ENCODE measurements at regions of chr7 and their contacts with region 1.

Region 1: GRCh38 chr7:142459551-142459963 is 201.7 kb upstream of the PRSS58 start:
- DNase-seq: peak in 5 of 9 donors; percentile 19 to 42 (median 34)
- ATAC-seq: peak; percentile 72
- H3K4me3 ChIP-seq: no peak overlapping the region
- H3K4me3 Mint-ChIP-seq: peak overlapping the region; percentile 12 to 83 (median 47)
- H3K27ac ChIP-seq: peak overlapping the region; percentile 46
- H3K27ac Mint-ChIP-seq: peak overlapping the region; percentile 24 to 92 (median 67)
- H3K4me1 ChIP-seq: peaks cover 4 to 42% of the 10 kb centered on the region in 2 donors
- H3K4me1 Mint-ChIP-seq: peaks cover 38 to 86% (median 81%) of the 10 kb centered on the region in 7 donors
- H3K27me3 ChIP-seq: no peaks in the 10 kb centered on the region
- H3K27me3 Mint-ChIP-seq: peaks cover 0 to 7% (median 0%) of the 10 kb centered on the region in 5 donors

Region 2: GRCh38 chr7:142298009-142298408 is 161.5 kb before region 1 on chr7:
- CTCF ChIA-PET with region 1: no interaction called
- POLR2A ChIA-PET with region 1: no interaction called
- intact Hi-C with region 1: no loop called
- DNase-seq: no peak
- ATAC-seq: no peak
- H3K4me3 ChIP-seq: no peak overlapping the region
- H3K4me3 Mint-ChIP-seq: peak overlapping the region in 2 of 10 donors; percentile 31 to 62
- H3K27ac ChIP-seq: no peak overlapping the region
- H3K27ac Mint-ChIP-seq: no peak overlapping the region
- H3K4me1 ChIP-seq: peaks cover 0 to 21% of the 10 kb centered on the region in 2 donors
- H3K4me1 Mint-ChIP-seq: peaks cover 9 to 36% (median 24%) of the 10 kb centered on the region in 7 donors
- H3K27me3 ChIP-seq: no peaks in the 10 kb centered on the region
- H3K27me3 Mint-ChIP-seq: peaks cover 10 to 42% (median 25%) of the 10 kb centered on the region in 5 donors

Region 3: GRCh38 chr7:142412551-142413193 is 46.9 kb before region 1 on chr7:
- CTCF ChIA-PET with region 1: interaction called, 4 read pairs
- POLR2A ChIA-PET with region 1: no interaction called
- intact Hi-C with region 1: loop called in 1 of 2 experiments (anchors 1 kb)
- DNase-seq: peak in 8 of 9 donors; percentile 19 to 58 (median 38)
- ATAC-seq: peak; percentile 88
- H3K4me3 ChIP-seq: no peak overlapping the region
- H3K4me3 Mint-ChIP-seq: peak overlapping the region in 6 of 10 donors; percentile 8 to 56 (median 26)
- H3K27ac ChIP-seq: no peak overlapping the region
- H3K27ac Mint-ChIP-seq: peak overlapping the region in 3 of 9 donors; percentile 3 to 69 (median 6)
- H3K4me1 ChIP-seq: peaks cover 0 to 3% of the 10 kb centered on the region in 2 donors
- H3K4me1 Mint-ChIP-seq: peaks cover 4 to 7% (median 6%) of the 10 kb centered on the region in 7 donors
- H3K27me3 ChIP-seq: no peaks in the 10 kb centered on the region
- H3K27me3 Mint-ChIP-seq: peaks cover 0 to 19% (median 0%) of the 10 kb centered on the region in 5 donors

Region 4: DNA sequence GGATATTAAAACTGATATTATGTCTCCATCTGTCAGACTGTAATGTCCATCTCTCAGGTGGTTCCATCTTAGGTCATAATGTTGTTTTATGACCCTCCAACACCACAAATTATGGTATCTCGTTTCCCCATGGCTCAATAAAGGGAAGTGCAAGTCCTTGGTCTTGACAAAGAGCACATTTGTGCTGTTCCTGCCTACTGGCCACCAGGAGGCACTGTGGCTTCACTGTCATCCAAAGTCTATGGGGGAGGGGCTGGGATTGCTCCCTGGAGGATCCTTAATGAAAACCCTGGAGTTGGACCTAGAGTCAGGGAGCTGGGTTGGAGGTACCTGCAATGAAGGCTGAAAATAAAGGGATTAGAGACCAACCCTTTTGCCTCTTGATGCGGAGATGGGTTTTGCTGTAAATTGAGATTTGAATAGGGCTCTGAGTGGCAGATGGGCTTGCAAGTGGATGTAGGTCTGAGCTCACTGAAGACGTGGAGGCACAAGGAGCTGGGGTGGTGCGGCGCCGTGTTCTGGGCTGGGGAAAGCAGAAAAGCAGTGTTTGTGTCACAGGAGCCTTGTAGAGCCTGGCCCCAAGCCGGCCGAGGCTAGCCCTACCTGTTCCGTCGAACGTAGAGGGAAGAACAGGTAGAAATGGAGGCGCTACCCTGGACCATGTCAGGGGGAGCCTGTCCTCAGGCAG is 21.2 kb before region 1 on chr7:
- CTCF ChIA-PET with region 1: interaction called, 6 read pairs
- POLR2A ChIA-PET with region 1: interaction called, 7 read pairs
- intact Hi-C with region 1: loop called in 1 of 2 experiments (anchors 1 kb)
- DNase-seq: peak in 4 of 9 donors; percentile 25 to 37 (median 31)
- ATAC-seq: peak; percentile 71
- H3K4me3 ChIP-seq: no peak overlapping the region
- H3K4me3 Mint-ChIP-seq: peak overlapping the region in 2 of 10 donors; percentile 0 to 4
- H3K27ac ChIP-seq: no peak overlapping the region
- H3K27ac Mint-ChIP-seq: peak overlapping the region in 2 of 9 donors; percentile 8 to 11
- H3K4me1 ChIP-seq: peaks cover 6 to 26% of the 10 kb centered on the region in 2 donors
- H3K4me1 Mint-ChIP-seq: peaks cover 39 to 70% (median 66%) of the 10 kb centered on the region in 7 donors
- H3K27me3 ChIP-seq: no peaks in the 10 kb centered on the region
- H3K27me3 Mint-ChIP-seq: no peaks in the 10 kb centered on the region

Region 5: GRCh38 chr7:142469696-142470543 is 10.4 kb after region 1 on chr7:
- CTCF ChIA-PET with region 1: interaction called, 452 read pairs
- POLR2A ChIA-PET with region 1: interaction called, 8 read pairs
- intact Hi-C with region 1: no loop called
- DNase-seq: no peak
- ATAC-seq: peak; percentile 40
- H3K4me3 ChIP-seq: no peak overlapping the region
- H3K4me3 Mint-ChIP-seq: peak overlapping the region; percentile 33 to 83 (median 67)
- H3K27ac ChIP-seq: no peak overlapping the region
- H3K27ac Mint-ChIP-seq: peak overlapping the region in 7 of 9 donors; percentile 37 to 92 (median 83)
- H3K4me1 ChIP-seq: peaks cover 0 to 47% of the 10 kb centered on the region in 2 donors
- H3K4me1 Mint-ChIP-seq: peaks cover 40 to 89% (median 82%) of the 10 kb centered on the region in 7 donors
- H3K27me3 ChIP-seq: no peaks in the 10 kb centered on the region
- H3K27me3 Mint-ChIP-seq: peaks cover 0 to 3% (median 0%) of the 10 kb centered on the region in 5 donors

Region 6: GRCh38 chr7:142496545-142497041 is 37.0 kb after region 1 on chr7:
- CTCF ChIA-PET with region 1: interaction called, 79 read pairs
- POLR2A ChIA-PET with region 1: interaction called, 5 read pairs
- intact Hi-C with region 1: loop called (anchors 1 to 5 kb)
- DNase-seq: peak in 7 of 9 donors; percentile 39 to 58 (median 45)
- ATAC-seq: peak; percentile 71
- H3K4me3 ChIP-seq: peak overlapping the region; percentile 30
- H3K4me3 Mint-ChIP-seq: peak overlapping the region; percentile 41 to 85 (median 70)
- H3K27ac ChIP-seq: peak overlapping the region; percentile 64
- H3K27ac Mint-ChIP-seq: peak overlapping the region; percentile 33 to 93 (median 77)
- H3K4me1 ChIP-seq: peaks cover 5 to 46% of the 10 kb centered on the region in 2 donors
- H3K4me1 Mint-ChIP-seq: peaks cover 15 to 72% (median 65%) of the 10 kb centered on the region in 7 donors
- H3K27me3 ChIP-seq: no peaks in the 10 kb centered on the region
- H3K27me3 Mint-ChIP-seq: peaks cover 0 to 9% (median 0%) of the 10 kb centered on the region in 5 donors

Region 7: GRCh38 chr7:142516038-142516501 is 56.5 kb after region 1 on chr7:
- CTCF ChIA-PET with region 1: interaction called, 23 read pairs
- POLR2A ChIA-PET with region 1: interaction called, 7 read pairs
- intact Hi-C with region 1: loop called (anchors 1 to 5 kb)
- DNase-seq: peak in 5 of 9 donors; percentile 42 to 55 (median 47)
- ATAC-seq: peak; percentile 85
- H3K4me3 ChIP-seq: no peak overlapping the region
- H3K4me3 Mint-ChIP-seq: peak overlapping the region in 7 of 10 donors; percentile 4 to 81 (median 46)
- H3K27ac ChIP-seq: no peak overlapping the region
- H3K27ac Mint-ChIP-seq: peak overlapping the region in 8 of 9 donors; percentile 32 to 92 (median 74)
- H3K4me1 ChIP-seq: peaks cover 0 to 35% of the 10 kb centered on the region in 2 donors
- H3K4me1 Mint-ChIP-seq: peaks cover 19 to 67% (median 56%) of the 10 kb centered on the region in 7 donors
- H3K27me3 ChIP-seq: no peaks in the 10 kb centered on the region
- H3K27me3 Mint-ChIP-seq: peaks cover 0 to 10% (median 0%) of the 10 kb centered on the region in 5 donors

Region 8: DNA sequence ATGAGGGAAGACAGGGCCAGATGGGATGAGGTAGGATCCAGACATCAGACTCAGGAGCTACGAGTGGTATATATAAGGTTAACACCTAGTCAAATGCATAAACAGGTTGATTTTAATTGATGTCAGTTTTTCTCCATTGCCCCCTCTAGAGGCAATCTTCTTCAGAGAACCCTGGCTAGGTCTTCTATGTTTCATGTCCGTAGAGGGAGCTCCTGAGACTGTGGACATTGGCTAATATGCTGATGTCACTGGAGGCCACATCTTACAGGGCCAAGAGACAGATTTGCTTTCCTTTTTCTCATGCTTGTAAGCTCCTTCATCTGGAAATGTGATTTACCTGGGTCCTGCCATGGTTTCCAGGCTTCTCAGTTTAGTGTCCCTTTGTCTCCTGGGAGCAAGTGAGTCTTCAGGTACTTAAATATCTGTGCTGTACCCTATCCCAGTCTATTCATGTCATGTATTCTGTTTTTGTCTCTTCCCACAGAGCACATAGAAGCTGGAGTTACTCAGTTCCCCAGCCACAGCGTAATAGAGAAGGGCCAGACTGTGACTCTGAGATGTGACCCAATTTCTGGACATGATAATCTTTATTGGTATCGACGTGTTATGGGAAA is 128.1 kb after region 1 on chr7:
- CTCF ChIA-PET with region 1: interaction called, 7 read pairs
- POLR2A ChIA-PET with region 1: no interaction called
- intact Hi-C with region 1: loop called in 1 of 2 experiments (anchors 10 kb)
- DNase-seq: peak in 7 of 9 donors; percentile 18 to 53 (median 34)
- ATAC-seq: peak; percentile 91
- H3K4me3 ChIP-seq: no peak overlapping the region
- H3K4me3 Mint-ChIP-seq: peak overlapping the region in 4 of 10 donors; percentile 5 to 56 (median 24)
- H3K27ac ChIP-seq: no peak overlapping the region
- H3K27ac Mint-ChIP-seq: peak overlapping the region in 4 of 9 donors; percentile 12 to 66 (median 42)
- H3K4me1 ChIP-seq: no peaks in the 10 kb centered on the region
- H3K4me1 Mint-ChIP-seq: peaks cover 0 to 16% (median 5%) of the 10 kb centered on the region in 7 donors
- H3K27me3 ChIP-seq: no peaks in the 10 kb centered on the region
- H3K27me3 Mint-ChIP-seq: no peaks in the 10 kb centered on the region